Activated T-helper 1 cell treated with anti-CD3 and anti-CD28 coated beads, Interleukin-12 subunit alpha, Interleukin-12 subunit beta, Interleukin-2, Interleukin-4 antibody, amounts not matched to agents 30 ng/mL and 10 ng/mL and 1 ng/mL, durations not matched to agents 14 hours and 24 hours and 36 hours (primary cell): ENCODE measurements at regions of chr10 and their contacts with region 1.

Region 1: DNA sequence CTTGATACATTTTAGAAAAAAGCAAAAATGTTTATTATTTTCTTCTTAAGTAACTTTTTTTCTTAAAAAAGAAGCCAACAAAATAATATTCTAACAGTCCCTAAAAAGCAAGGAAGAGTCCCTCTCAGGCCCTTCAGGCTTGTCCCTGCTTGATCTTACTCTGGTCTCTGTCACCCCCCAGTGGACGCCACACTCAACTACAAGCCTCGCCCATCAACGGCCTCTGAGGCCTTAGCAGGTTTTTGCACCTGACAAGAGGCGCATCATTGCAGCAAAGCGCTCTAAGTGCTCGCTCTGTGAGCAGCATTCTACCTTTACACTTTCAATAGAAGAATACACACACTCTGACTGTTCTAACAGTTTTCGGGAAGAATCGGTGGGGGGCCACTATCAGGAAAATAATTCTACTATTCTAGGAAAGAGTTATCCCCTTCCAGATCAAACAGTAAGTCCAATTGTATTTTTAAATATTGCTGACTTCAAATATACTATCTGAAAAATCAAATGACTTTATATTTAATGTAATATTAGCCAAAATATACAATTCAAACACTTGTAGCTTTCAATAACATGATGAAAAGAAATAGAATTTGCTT is 139.2 kb downstream of the USP6NL start:
- DNase-seq: peak; percentile 52
- H3K4me3 Mint-ChIP-seq: no peak overlapping the region
- H3K27ac Mint-ChIP-seq: no peak overlapping the region
- H3K4me1 Mint-ChIP-seq: no peaks in the 10 kb centered on the region
- H3K27me3 Mint-ChIP-seq: peaks cover 2% of the 10 kb centered on the region

Region 2: GRCh38 chr10:11017570-11018431 is 454.5 kb before region 1 on chr10 and contains the start of gene CELF2:
- intact Hi-C with region 1: loop called (anchors 10 kb)
- DNase-seq: peak; percentile 37
- H3K4me3 Mint-ChIP-seq: peak within 1 kb of the TSS; percentile 71
- H3K27ac Mint-ChIP-seq: peak within 1 kb of the TSS; percentile 6
- H3K4me1 Mint-ChIP-seq: peaks cover 20% of the 10 kb centered on the region
- H3K27me3 Mint-ChIP-seq: peaks cover 83% of the 10 kb centered on the region
- total RNA-seq, gene CELF2: 110 and 111 TPM in 2 replicates

Region 3: GRCh38 chr10:11328264-11329061 is 143.8 kb before region 1 on chr10:
- intact Hi-C with region 1: loop called (anchors 5 kb)
- DNase-seq: no peak
- H3K4me3 Mint-ChIP-seq: no peak overlapping the region
- H3K27ac Mint-ChIP-seq: no peak overlapping the region
- H3K4me1 Mint-ChIP-seq: peaks cover 6% of the 10 kb centered on the region
- H3K27me3 Mint-ChIP-seq: no peaks in the 10 kb centered on the region

Region 4: DNA sequence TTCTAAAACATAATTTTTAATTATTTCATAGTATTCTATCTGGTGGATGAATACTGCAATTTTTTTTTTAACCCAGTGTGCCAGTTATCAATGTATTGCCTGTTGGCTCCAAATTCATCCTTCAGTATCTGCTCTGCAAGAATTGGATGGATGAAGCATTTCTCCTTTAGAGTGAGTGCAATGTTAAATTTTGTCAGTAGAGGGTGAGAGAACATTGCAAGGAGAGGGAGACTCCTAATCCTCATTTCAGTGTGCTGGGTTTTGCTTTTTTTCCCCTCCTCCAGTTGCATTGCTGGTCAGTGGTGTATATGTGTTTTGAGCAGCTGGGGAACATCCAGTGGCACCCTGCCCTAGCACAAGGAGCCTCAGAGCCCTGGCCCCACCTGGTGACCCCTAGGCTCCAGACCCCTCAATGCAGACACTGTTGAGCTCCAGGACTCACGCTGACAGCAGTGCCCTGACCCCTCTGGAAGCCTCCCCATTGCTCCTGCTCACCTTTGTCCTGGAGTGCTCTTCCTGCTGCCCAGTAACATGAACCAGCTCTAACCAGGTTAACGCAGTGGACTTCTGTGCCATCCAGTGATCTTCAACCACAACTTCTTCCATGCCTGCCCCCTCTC is 60.2 kb before region 1 on chr10:
- intact Hi-C with region 1: loop called (anchors 5 kb)
- DNase-seq: no peak
- H3K4me3 Mint-ChIP-seq: no peak overlapping the region
- H3K27ac Mint-ChIP-seq: no peak overlapping the region
- H3K4me1 Mint-ChIP-seq: peaks cover 9% of the 10 kb centered on the region
- H3K27me3 Mint-ChIP-seq: peaks cover 17% of the 10 kb centered on the region

Region 5: GRCh38 chr10:11757821-11758463 is 285.7 kb after region 1 on chr10:
- intact Hi-C with region 1: loop called (anchors 1 kb)
- DNase-seq: peak; percentile 69
- H3K4me3 Mint-ChIP-seq: no peak overlapping the region
- H3K27ac Mint-ChIP-seq: no peak overlapping the region
- H3K4me1 Mint-ChIP-seq: no peaks in the 10 kb centered on the region
- H3K27me3 Mint-ChIP-seq: peaks cover 14% of the 10 kb centered on the region